CD8-positive, alpha-beta T cell (primary cell): ENCODE measurements at regions of chr2 and their contacts with region 1.

Region 1: DNA sequence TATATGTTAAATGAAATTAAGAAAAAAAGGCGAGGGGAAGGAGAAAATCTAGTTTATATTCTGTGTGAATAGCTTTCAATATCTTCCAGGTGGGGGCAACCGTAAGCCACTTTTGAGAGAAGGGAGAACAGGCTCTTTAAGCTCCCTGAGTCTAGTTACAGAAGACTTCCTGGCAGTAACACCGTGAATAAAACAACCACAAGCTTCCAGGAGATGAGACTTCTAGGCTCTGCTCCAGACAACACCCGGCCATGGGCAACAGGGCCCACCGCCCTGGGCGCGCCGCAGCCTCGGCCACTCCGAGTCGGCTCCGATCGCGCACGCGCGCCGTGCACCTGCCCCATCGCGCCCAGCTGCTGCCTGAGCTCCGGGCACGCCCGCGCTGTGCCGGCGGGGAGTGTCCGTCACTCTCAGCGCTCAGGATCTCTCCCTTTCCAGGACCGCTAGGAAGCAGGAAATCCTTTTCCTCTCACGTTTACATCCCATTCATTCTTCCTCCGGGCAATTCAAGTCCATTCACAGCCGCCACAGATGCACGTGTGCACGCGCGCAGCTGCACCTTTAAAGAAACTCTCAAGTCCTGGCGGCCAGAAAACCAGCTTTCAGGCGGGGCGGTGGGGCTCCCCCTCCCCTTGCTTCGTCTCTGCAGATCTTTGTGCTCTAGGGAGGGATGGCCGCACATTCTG is 19.4 kb upstream of the PAX3 start:
- DNase-seq: peak in 2 of 9 experiments; percentile 30 to 33
- ATAC-seq: peak; percentile 39
- H3K4me3 ChIP-seq: peak overlapping the region in 1 of 2 experiments; percentile 16
- H3K4me3 Mint-ChIP-seq: peak overlapping the region; percentile 80
- H3K27ac ChIP-seq: no peak overlapping the region
- H3K27ac Mint-ChIP-seq: no peak overlapping the region
- H3K4me1 ChIP-seq: peaks cover 6% of the 10 kb centered on the region
- H3K4me1 Mint-ChIP-seq: peaks cover 12% of the 10 kb centered on the region
- H3K27me3 ChIP-seq: peaks cover 0 to 4% of the 10 kb centered on the region in 2 experiments
- H3K27me3 Mint-ChIP-seq: peaks cover 64% of the 10 kb centered on the region
- CTCF ChIP-seq: no peak

Region 2: DNA sequence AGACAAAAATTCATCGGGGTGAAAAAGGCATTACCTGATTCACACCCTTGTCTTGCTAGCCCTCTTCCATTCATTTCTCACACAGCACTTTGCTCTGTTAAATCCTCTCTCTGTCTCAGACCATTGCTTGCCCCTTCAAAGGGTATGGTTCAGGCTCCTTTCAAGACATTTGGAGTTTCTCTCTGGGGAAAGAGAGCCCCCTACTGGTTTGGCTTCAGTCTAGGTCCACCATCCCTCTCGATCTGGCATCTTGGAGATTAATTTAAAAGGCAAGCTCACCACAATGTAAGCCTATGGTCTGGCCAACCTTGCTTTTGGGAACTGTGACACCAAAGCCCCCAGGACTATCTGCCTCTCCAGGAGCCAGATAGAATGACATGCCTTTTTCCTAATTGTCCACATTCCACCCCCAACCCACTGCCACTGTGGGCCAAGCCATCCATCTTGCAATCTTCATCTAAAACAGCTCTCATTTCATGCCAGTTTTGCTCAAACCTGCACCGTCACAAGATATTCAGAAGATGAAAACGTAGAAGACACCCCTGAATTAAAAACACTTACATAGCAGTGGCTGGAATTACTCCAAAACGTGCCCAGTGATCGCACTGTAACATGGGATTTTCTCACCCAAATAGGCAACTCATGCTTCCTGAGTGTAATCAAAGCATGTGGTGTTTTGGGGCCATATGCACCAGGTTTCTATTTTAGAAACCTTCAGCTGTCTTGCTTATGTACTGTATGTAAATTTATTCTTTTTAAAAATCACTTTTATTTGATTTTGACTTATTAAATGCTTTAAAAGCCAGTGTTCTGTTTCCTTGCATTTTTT is 243.9 kb after region 1 on chr2:
- CTCF ChIA-PET with region 1: no interaction called
- POLR2A ChIA-PET with region 1: no interaction called
- intact Hi-C with region 1: loop called (anchors 5 kb)
- DNase-seq: peak in 3 of 9 experiments; percentile 14 to 30 (median 27)
- ATAC-seq: no peak
- H3K4me3 ChIP-seq: no peak overlapping the region
- H3K4me3 Mint-ChIP-seq: no peak overlapping the region
- H3K27ac ChIP-seq: no peak overlapping the region
- H3K27ac Mint-ChIP-seq: no peak overlapping the region
- H3K4me1 ChIP-seq: no peaks in the 10 kb centered on the region
- H3K4me1 Mint-ChIP-seq: no peaks in the 10 kb centered on the region
- H3K27me3 ChIP-seq: no peaks in the 10 kb centered on the region
- H3K27me3 Mint-ChIP-seq: peaks cover 1% of the 10 kb centered on the region
- CTCF ChIP-seq: no peak

Region 3: GRCh38 chr2:222613715-222614331 is 295.7 kb after region 1 on chr2:
- CTCF ChIA-PET with region 1: interaction called, 7 read pairs
- POLR2A ChIA-PET with region 1: no interaction called
- intact Hi-C with region 1: loop called (anchors 5 kb)
- DNase-seq: peak in 2 of 9 experiments; percentile 26 to 43
- ATAC-seq: peak; percentile 62
- H3K4me3 ChIP-seq: no peak overlapping the region
- H3K4me3 Mint-ChIP-seq: no peak overlapping the region
- H3K27ac ChIP-seq: no peak overlapping the region
- H3K27ac Mint-ChIP-seq: no peak overlapping the region
- H3K4me1 ChIP-seq: no peaks in the 10 kb centered on the region
- H3K4me1 Mint-ChIP-seq: no peaks in the 10 kb centered on the region
- H3K27me3 ChIP-seq: no peaks in the 10 kb centered on the region
- H3K27me3 Mint-ChIP-seq: no peaks in the 10 kb centered on the region
- CTCF ChIP-seq: peak; percentile 63